RWPE1 (cell line): ENCODE measurements at regions of chr21 and their contacts with region 1.

Region 1: GRCh38 chr21:38669176-38669575 is 136.6 kb upstream of the ETS2 start:
- DNase-seq: peak; percentile 19
- H3K27ac ChIP-seq: no peak overlapping the region
- CTCF ChIP-seq: peak; percentile 35

Region 2: DNA sequence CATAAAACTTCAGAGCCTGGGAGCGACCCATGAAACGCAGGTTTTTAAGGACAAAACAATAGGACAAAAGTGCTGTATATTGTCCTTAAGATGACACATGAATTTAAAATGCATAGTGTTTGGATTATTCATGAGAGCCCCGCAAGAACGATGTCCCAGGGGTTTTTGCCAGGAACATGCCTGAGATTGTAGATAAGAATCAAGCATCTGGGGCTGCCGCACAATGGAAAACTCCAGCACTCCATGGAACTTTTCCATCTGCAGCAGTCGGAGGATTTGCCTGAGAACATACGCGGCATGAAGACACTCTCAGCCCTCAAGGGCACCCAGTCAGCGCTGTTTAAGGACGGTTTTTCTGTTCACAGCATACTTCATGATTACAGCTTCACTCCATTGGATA is 165.6 kb before region 1 on chr21:
- CTCF ChIA-PET with region 1: no interaction called
- POLR2A ChIA-PET with region 1: no interaction called
- DNase-seq: peak; percentile 8
- H3K27ac ChIP-seq: no peak overlapping the region
- CTCF ChIP-seq: no peak

Region 3: GRCh38 chr21:38712071-38712470 is 42.9 kb after region 1 on chr21:
- CTCF ChIA-PET with region 1: interaction called, 12 read pairs
- POLR2A ChIA-PET with region 1: no interaction called
- DNase-seq: peak; percentile 47
- H3K27ac ChIP-seq: no peak overlapping the region
- CTCF ChIP-seq: peak; percentile 62

Region 4: GRCh38 chr21:38773099-38774061 is 104.2 kb after region 1 on chr21:
- CTCF ChIA-PET with region 1: no interaction called
- POLR2A ChIA-PET with region 1: no interaction called
- DNase-seq: peak; percentile 85
- H3K27ac ChIP-seq: peak overlapping the region; percentile 90
- CTCF ChIP-seq: no peak

Region 5: DNA sequence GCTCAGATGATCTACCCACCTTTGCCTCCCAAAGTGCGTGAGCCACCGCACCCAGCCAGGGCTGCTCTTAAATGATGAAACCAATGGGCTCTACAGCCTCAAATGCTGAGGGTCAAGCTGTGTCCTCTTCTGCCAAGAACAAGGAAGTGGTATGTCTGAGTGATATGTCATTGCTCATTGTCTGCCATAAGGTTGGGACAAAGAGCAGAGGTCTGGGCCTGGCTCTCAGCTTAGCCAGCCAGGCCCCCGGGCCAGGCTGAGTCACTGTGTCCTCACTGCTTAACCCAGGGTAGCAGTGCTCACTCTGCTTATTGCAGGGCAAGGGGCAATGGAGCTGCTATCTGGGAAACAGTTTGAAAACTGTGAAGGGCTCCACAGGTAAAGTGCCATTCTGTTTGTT is 128.3 kb after region 1 on chr21:
- CTCF ChIA-PET with region 1: no interaction called
- POLR2A ChIA-PET with region 1: no interaction called
- DNase-seq: peak; percentile 68
- H3K27ac ChIP-seq: peak overlapping the region; percentile 78
- CTCF ChIP-seq: no peak

Region 6: DNA sequence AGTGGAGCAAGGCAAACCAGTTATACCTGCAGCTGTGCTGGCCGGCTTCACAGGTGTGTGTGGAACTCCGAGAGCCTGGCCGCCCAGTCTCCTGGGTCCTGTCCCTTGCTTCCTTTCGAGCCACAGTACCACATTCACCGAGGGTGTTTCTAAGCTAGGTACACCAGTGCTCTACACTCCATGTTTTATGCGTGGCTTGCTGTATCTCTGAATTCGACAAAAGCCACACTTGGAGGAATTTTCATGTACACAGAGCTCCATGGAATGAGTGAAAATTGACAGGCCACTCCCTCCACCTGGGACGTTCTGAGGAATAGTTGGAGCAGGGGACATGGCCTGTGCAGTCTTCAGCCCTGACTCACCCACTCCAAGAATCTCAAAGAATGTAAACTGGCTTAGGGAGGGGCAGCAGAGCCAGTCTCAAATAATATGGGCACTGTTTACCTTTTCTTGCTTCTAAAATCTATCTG is 150.6 kb after region 1 on chr21:
- CTCF ChIA-PET with region 1: no interaction called
- POLR2A ChIA-PET with region 1: no interaction called
- DNase-seq: peak; percentile 85
- H3K27ac ChIP-seq: peak overlapping the region; percentile 82
- CTCF ChIP-seq: no peak

Region 7: GRCh38 chr21:39137248-39138178 is 468.3 kb after region 1 on chr21:
- CTCF ChIA-PET with region 1: interaction called, 17 read pairs
- POLR2A ChIA-PET with region 1: no interaction called
- DNase-seq: peak; percentile 63
- H3K27ac ChIP-seq: peak overlapping the region; percentile 56
- CTCF ChIP-seq: no peak